Heart left ventricle (tissue), 16 donors: ENCODE measurements at regions of chr2 and their contacts with region 1.

Region 1: GRCh38 chr2:190069936-190070696 is 7.6 kb upstream of the MSTN start:
- DNase-seq: peak in 2 of 5 donors; percentile 20 to 28
- ATAC-seq: peak in 2 of 4 donors; percentile 47 to 54
- H3K4me3 ChIP-seq: no peak overlapping the region
- H3K27ac ChIP-seq: no peak overlapping the region
- H3K4me1 ChIP-seq: peaks cover 0 to 5% (median 0%) of the 10 kb centered on the region in 12 donors
- H3K27me3 ChIP-seq: no peaks in the 10 kb centered on the region
- CTCF ChIP-seq: peak; percentile 36 to 67 (median 58)
- POLR2A ChIP-seq: no peak

Region 2: DNA sequence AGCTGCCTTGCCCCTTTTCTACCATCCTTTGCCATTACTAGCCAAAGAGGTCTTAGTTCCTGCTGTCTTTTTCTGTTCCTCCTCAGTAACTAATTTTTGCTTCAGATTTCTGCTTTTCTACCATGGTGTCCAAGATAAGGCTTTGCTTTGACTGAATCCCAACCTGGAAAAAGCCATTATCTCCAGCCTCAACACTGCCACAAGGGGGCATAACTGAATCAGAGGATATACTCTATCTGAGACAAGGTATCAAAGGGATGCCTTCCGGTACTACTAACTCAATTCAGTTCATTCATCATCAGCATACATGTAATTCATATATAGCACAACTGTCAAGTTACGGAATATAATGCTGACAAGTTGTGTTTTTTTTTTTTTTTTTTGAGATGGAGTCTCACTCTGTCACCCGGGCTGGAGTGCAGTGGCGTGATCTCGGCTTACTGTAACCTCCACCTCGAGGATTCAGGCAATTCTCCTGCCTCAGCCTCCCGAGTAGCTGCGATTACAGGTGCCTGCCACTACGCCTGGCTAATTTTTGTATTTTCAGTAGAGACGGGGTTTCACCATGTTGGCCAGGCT is 318.9 kb before region 1 on chr2:
- intact Hi-C with region 1: loop called in 1 of 10 experiments (anchors 2 kb)
- DNase-seq: no peak
- ATAC-seq: peak in 1 of 4 donors; percentile 41
- H3K4me3 ChIP-seq: no peak overlapping the region
- H3K27ac ChIP-seq: no peak overlapping the region
- H3K4me1 ChIP-seq: peaks cover 0 to 5% (median 0%) of the 10 kb centered on the region in 12 donors
- H3K27me3 ChIP-seq: no peaks in the 10 kb centered on the region
- CTCF ChIP-seq: peak; percentile 26 to 60 (median 44)
- POLR2A ChIP-seq: no peak

Region 3: GRCh38 chr2:189798312-189799029 is 271.6 kb before region 1 on chr2:
- intact Hi-C with region 1: loop called in 6 of 10 experiments (anchors 5 to 10 kb)
- DNase-seq: no peak
- ATAC-seq: peak; percentile 44 to 71 (median 54)
- H3K4me3 ChIP-seq: no peak overlapping the region
- H3K27ac ChIP-seq: no peak overlapping the region
- H3K4me1 ChIP-seq: peaks cover 0 to 19% (median 0%) of the 10 kb centered on the region in 12 donors
- H3K27me3 ChIP-seq: no peaks in the 10 kb centered on the region
- CTCF ChIP-seq: peak in 8 of 12 donors; percentile 14 to 52 (median 40)
- POLR2A ChIP-seq: no peak

Region 4: DNA sequence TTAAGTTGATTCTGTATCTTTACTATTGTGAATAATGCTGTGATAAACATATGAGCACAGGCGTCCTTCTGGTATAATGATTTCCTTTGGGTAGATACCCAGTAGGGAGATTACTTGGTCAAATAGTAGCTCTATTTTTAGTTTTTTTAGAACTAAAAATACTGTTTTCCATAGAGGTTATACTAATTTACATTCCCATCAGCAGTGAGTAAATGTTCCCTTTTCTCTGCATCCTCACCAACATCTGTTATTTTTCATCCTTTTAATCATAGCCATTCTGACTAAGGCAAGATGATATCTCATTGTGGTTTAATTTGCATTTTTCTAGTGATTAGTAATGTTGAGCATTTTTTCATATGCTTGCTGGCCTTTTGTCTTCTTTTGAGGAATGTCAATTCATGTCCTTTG is 250.8 kb before region 1 on chr2:
- intact Hi-C with region 1: loop called in 1 of 10 experiments (anchors 10 kb)
- DNase-seq: no peak
- ATAC-seq: no peak
- H3K4me3 ChIP-seq: no peak overlapping the region
- H3K27ac ChIP-seq: no peak overlapping the region
- H3K4me1 ChIP-seq: no peaks in the 10 kb centered on the region
- H3K27me3 ChIP-seq: no peaks in the 10 kb centered on the region
- CTCF ChIP-seq: no peak
- POLR2A ChIP-seq: no peak